Heart right ventricle (tissue), 16 donors: ENCODE measurements at regions of chr1 and their contacts with region 1.

Region 1: GRCh38 chr1:78132174-78132947 is 86.6 kb downstream of the GIPC2 start:
- DNase-seq: no peak
- ATAC-seq: no peak
- H3K4me3 ChIP-seq: no peak overlapping the region
- H3K27ac ChIP-seq: no peak overlapping the region
- H3K4me1 ChIP-seq: no peaks in the 10 kb centered on the region
- H3K27me3 ChIP-seq: no peaks in the 10 kb centered on the region
- CTCF ChIP-seq: no peak

Region 2: GRCh38 chr1:78377356-78377928 is 245.1 kb after region 1 on chr1:
- intact Hi-C with region 1: no loop called
- DNase-seq: no peak
- ATAC-seq: no peak
- H3K4me3 ChIP-seq: no peak overlapping the region
- H3K27ac ChIP-seq: no peak overlapping the region
- H3K4me1 ChIP-seq: no peaks in the 10 kb centered on the region
- H3K27me3 ChIP-seq: no peaks in the 10 kb centered on the region
- CTCF ChIP-seq: no peak

Region 3: GRCh38 chr1:78607334-78607927 is 475.1 kb after region 1 on chr1:
- intact Hi-C with region 1: loop called in 5 of 10 experiments (anchors 5 to 10 kb)
- DNase-seq: no peak
- ATAC-seq: no peak
- H3K4me3 ChIP-seq: no peak overlapping the region
- H3K27ac ChIP-seq: no peak overlapping the region
- H3K4me1 ChIP-seq: peaks cover 0 to 6% (median 0%) of the 10 kb centered on the region in 9 donors
- H3K27me3 ChIP-seq: peaks cover 0 to 8% (median 4%) of the 10 kb centered on the region in 7 donors
- CTCF ChIP-seq: peak in 8 of 9 donors; percentile 28 to 64 (median 52)

Region 4: GRCh38 chr1:78676347-78676982 is 544.1 kb after region 1 on chr1:
- intact Hi-C with region 1: loop called in 1 of 10 experiments (anchors 5 kb)
- DNase-seq: peak in 1 of 2 donors; percentile 64
- ATAC-seq: peak in 1 of 8 donors; percentile 64
- H3K4me3 ChIP-seq: no peak overlapping the region
- H3K27ac ChIP-seq: no peak overlapping the region
- H3K4me1 ChIP-seq: no peaks in the 10 kb centered on the region
- H3K27me3 ChIP-seq: no peaks in the 10 kb centered on the region
- CTCF ChIP-seq: peak; percentile 80 to 93 (median 86)